ENCODE measurements at regions of chr9 and their contacts with region 1.

Region 1: DNA sequence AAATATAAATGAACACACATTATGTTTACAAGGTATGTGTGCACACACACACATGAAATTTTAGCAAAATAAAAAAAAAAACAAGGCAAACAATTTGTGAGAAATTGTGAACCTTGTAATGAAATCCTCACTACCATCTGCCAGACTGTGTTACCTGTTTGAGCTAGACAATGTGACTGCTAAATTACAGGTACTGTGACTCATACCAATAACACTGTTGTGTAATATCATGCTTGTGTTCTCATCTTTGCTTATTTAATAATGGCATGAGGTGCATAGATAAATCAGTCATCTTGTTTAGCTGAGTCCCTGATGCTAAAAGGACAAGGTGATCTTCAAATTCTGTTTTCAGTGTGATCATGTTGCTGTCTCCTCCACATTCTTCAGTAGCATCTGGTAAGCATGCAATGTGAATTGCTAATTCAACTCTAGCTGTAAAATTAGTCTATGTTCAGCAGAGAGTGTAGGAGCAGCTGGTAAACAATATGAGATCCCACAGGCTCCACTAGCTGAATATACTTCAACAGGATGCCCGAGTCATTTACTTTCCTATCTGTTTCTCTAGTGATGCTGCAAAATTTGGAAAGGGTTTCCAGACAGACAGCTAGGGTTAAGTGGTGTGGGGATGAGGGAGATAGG is 966.3 kb upstream of the C9orf72 start:
- DNase-seq: no peak
- H3K4me3 Mint-ChIP-seq: no peak overlapping the region
- H3K27ac Mint-ChIP-seq: no peak overlapping the region
- H3K4me1 Mint-ChIP-seq: no peaks in the 10 kb centered on the region
- H3K27me3 Mint-ChIP-seq: no peaks in the 10 kb centered on the region

Region 2: DNA sequence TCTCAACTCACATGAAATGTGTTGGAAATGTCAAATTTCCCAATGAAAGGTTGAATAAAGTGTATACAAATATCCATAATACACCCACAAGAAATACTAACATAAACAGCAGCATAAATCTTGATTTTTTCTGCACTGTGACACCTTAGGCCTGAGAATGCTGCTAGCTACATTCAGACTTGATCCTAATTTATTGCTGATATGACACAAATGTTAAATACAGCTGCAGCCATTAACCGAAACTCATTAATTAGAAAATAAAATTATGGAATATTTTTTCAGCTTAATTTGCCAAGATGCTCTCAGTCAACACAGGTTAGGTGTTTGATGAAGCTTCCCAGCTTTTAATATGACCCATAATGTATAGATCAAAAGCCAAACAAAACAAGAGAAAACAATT is 52.0 kb before region 1 on chr9:
- intact Hi-C with region 1: loop called (anchors 10 kb)
- DNase-seq: no peak
- H3K4me3 Mint-ChIP-seq: no peak overlapping the region
- H3K27ac Mint-ChIP-seq: no peak overlapping the region
- H3K4me1 Mint-ChIP-seq: no peaks in the 10 kb centered on the region
- H3K27me3 Mint-ChIP-seq: no peaks in the 10 kb centered on the region